ENCODE measurements at regions of chr2 and their contacts with region 1.

Region 1: GRCh38 chr2:102355526-102356380 is at the start of gene IL18R1:
- DNase-seq: peak; percentile 81
- ATAC-seq: peak; percentile 88
- H3K4me3 ChIP-seq: peak within 1 kb of the TSS; percentile 56 to 91 (median 77)
- H3K4me3 Mint-ChIP-seq: peak within 1 kb of the TSS; percentile 82
- H3K27ac ChIP-seq: peak within 1 kb of the TSS; percentile 64 to 80
- H3K27ac Mint-ChIP-seq: peak within 1 kb of the TSS; percentile 82
- H3K4me1 ChIP-seq: peaks cover 9 to 23% of the 10 kb centered on the region in 2 donors
- H3K4me1 Mint-ChIP-seq: peaks cover 23% of the 10 kb centered on the region
- H3K27me3 ChIP-seq: no peaks in the 10 kb centered on the region
- H3K27me3 Mint-ChIP-seq: no peaks in the 10 kb centered on the region
- CTCF ChIP-seq: peak; percentile 78
- total RNA-seq, gene IL18R1: 1.1 and 2.4 TPM in 2 replicates

Region 2: GRCh38 chr2:102251042-102251848 is 104.5 kb before region 1 on chr2:
- CTCF ChIA-PET with region 1: no interaction called
- POLR2A ChIA-PET with region 1: no interaction called
- intact Hi-C with region 1: loop called (anchors 5 kb)
- DNase-seq: peak; percentile 65
- ATAC-seq: peak; percentile 57
- H3K4me3 ChIP-seq: peak overlapping the region in 4 of 5 experiments; percentile 17 to 49 (median 40)
- H3K4me3 Mint-ChIP-seq: peak overlapping the region; percentile 77
- H3K27ac ChIP-seq: no peak overlapping the region
- H3K27ac Mint-ChIP-seq: no peak overlapping the region
- H3K4me1 ChIP-seq: peaks cover 8 to 12% of the 10 kb centered on the region in 2 donors
- H3K4me1 Mint-ChIP-seq: peaks cover 9% of the 10 kb centered on the region
- H3K27me3 ChIP-seq: peaks cover 0 to 28% (median 7%) of the 10 kb centered on the region in 4 experiments
- H3K27me3 Mint-ChIP-seq: peaks cover 35% of the 10 kb centered on the region
- CTCF ChIP-seq: peak; percentile 70

Region 3: GRCh38 chr2:102268510-102269209 is 87.1 kb before region 1 on chr2:
- CTCF ChIA-PET with region 1: no interaction called
- POLR2A ChIA-PET with region 1: no interaction called
- intact Hi-C with region 1: no loop called
- DNase-seq: no peak
- ATAC-seq: no peak
- H3K4me3 ChIP-seq: no peak overlapping the region
- H3K4me3 Mint-ChIP-seq: no peak overlapping the region
- H3K27ac ChIP-seq: no peak overlapping the region
- H3K27ac Mint-ChIP-seq: no peak overlapping the region
- H3K4me1 ChIP-seq: no peaks in the 10 kb centered on the region
- H3K4me1 Mint-ChIP-seq: no peaks in the 10 kb centered on the region
- H3K27me3 ChIP-seq: peaks cover 0 to 7% (median 0%) of the 10 kb centered on the region in 4 experiments
- H3K27me3 Mint-ChIP-seq: peaks cover 22% of the 10 kb centered on the region
- CTCF ChIP-seq: no peak

Region 4: DNA sequence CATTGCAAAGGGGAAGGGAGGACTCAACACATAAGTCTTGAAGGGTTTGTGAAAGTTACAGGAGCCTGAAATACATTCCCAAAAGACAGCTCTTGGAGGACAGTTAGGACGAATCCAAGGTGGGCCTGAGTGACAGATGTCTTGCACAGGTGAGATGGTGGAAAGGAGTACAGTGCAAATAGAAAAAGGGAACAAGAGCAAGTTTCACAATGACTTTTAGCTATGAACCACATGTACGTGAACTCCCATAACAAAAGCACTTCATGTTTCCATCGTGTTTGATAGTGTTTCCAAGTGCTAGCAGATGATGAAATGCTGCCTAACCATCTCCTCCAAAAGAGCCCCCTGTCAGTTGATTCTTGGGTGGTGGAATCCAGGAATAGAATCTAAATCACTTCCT is 69.0 kb after region 1 on chr2:
- CTCF ChIA-PET with region 1: interaction called, 4 read pairs
- POLR2A ChIA-PET with region 1: no interaction called
- intact Hi-C with region 1: loop called (anchors 5 kb)
- DNase-seq: peak; percentile 61
- ATAC-seq: peak; percentile 84
- H3K4me3 ChIP-seq: peak overlapping the region in 1 of 5 experiments; percentile 31
- H3K4me3 Mint-ChIP-seq: peak overlapping the region; percentile 3
- H3K27ac ChIP-seq: no peak overlapping the region
- H3K27ac Mint-ChIP-seq: peak overlapping the region; percentile 60
- H3K4me1 ChIP-seq: peaks cover 24 to 34% of the 10 kb centered on the region in 2 donors
- H3K4me1 Mint-ChIP-seq: peaks cover 31% of the 10 kb centered on the region
- H3K27me3 ChIP-seq: no peaks in the 10 kb centered on the region
- H3K27me3 Mint-ChIP-seq: no peaks in the 10 kb centered on the region
- CTCF ChIP-seq: no peak

Measured in B cell (primary cell).